ENCODE measurements at regions of chr7 and their contacts with region 1.

Region 1: DNA sequence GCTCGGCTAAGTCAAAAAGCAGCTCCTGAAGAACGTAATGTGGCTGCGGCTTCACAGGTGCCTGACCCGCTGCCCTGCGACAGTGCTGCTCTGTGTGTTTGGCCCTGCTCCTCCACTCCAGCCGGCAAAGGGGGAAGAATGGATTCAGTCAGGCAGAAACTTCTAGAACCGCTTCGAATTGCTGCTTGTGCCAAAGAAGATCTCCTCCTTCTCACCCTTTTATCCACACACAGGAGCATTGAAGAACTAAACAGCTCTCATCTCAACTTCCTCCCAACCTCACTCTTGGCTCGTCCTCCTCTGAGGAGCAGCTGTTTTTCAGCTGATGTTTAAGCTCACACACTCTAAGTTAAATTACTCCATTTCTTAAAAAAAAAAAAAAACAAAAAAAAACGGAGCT is 651.4 kb downstream of the INHBA start:
- DNase-seq: no peak
- H3K4me3 ChIP-seq: no peak overlapping the region
- H3K27ac ChIP-seq: no peak overlapping the region
- H3K27me3 ChIP-seq: no peaks in the 10 kb centered on the region
- CTCF ChIP-seq: no peak

Region 2: GRCh38 chr7:41544241-41544640 is 492.7 kb after region 1 on chr7:
- CTCF ChIA-PET with region 1: no interaction called
- POLR2A ChIA-PET with region 1: interaction called, 11 read pairs
- DNase-seq: no peak
- H3K4me3 ChIP-seq: no peak overlapping the region
- H3K27ac ChIP-seq: no peak overlapping the region
- H3K27me3 ChIP-seq: no peaks in the 10 kb centered on the region
- CTCF ChIP-seq: no peak

Measured in AG04450 (cell line).